ENCODE measurements at regions of chr11 and their contacts with region 1.

Region 1: GRCh38 chr11:59680287-59681154 is 11.7 kb upstream of the PATL1 start:
- DNase-seq: peak; percentile 64
- H3K4me3 ChIP-seq: no peak overlapping the region
- H3K27ac ChIP-seq: no peak overlapping the region
- H3K4me1 ChIP-seq: peaks cover 7% of the 10 kb centered on the region
- H3K27me3 ChIP-seq: no peaks in the 10 kb centered on the region
- CTCF ChIP-seq: peak; percentile 82 to 85

Region 2: GRCh38 chr11:58923300-58923788 is 757.2 kb before region 1 on chr11:
- CTCF ChIA-PET with region 1: no interaction called
- dilution Hi-C with region 1: no loop called
- in situ Hi-C with region 1: no loop called
- intact Hi-C with region 1: no loop called
- DNase-seq: peak; percentile 86
- H3K4me3 ChIP-seq: peak overlapping the region; percentile 7 to 44 (median 13)
- H3K27ac ChIP-seq: no peak overlapping the region
- H3K4me1 ChIP-seq: peaks cover 10% of the 10 kb centered on the region
- H3K27me3 ChIP-seq: no peaks in the 10 kb centered on the region
- CTCF ChIP-seq: peak; percentile 21 to 35

Region 3: DNA sequence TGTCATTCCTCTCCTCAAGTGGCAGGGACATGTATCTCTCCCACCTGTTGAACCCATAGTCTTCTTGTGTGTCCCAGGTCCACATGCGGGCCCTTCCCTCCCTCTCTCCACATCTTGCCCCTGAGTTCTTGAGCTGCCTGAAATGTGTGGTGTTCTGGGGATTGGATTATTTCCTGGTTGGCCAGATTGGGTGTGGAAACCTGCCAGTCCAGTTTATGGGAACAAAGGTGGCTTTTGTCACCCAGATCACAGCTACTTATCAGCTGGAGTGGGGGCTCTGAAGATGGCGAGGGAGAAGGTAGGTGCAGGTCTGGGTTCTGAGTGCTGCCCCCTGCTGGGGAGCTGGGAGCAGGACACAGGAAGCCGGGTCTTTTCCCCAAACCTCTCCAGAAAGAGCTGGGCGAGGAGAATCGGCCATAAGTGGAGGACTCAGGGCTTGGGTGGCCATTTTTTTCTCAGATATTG is 494.4 kb before region 1 on chr11:
- CTCF ChIA-PET with region 1: no interaction called
- dilution Hi-C with region 1: no loop called
- in situ Hi-C with region 1: no loop called
- intact Hi-C with region 1: loop called (anchors 5 kb)
- DNase-seq: peak; percentile 11
- H3K4me3 ChIP-seq: no peak overlapping the region
- H3K27ac ChIP-seq: no peak overlapping the region
- H3K4me1 ChIP-seq: no peaks in the 10 kb centered on the region
- H3K27me3 ChIP-seq: no peaks in the 10 kb centered on the region
- CTCF ChIP-seq: peak; percentile 62 to 88

Region 4: DNA sequence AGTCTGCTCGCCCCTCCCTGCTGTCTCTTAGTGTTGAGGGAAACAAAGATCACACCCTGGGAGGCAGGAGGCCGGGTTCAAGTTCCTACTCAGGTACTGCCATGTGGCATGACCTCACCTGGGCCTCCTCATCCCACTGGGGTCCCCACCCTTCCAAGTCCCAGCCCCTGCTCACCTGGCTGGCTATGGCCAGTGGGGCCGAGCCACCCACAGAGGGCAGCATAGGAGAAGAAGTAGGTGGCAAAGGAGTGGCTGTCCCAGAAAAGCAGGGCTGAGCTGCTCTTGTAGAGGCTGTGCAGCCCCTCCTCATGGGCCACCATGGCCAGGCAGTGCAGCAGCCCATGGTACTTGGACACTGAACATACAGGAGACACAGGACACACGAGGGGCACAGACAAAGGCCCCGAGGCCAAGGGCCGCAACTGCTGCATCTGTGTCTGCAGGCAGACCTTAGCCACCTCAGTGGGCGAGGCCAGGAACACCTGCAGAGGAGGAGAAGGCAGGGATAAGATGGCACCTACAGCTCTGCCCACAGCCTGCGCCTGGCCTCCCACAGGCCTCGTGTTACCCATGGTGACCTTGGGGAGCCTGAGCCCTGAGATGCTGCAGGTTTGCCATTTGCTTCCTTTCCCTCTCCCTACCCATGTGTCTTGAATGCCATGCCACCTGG is 417.2 kb before region 1 on chr11:
- CTCF ChIA-PET with region 1: no interaction called
- dilution Hi-C with region 1: no loop called
- in situ Hi-C with region 1: no loop called
- intact Hi-C with region 1: loop called (anchors 5 kb)
- DNase-seq: peak; percentile 16
- H3K4me3 ChIP-seq: no peak overlapping the region
- H3K27ac ChIP-seq: no peak overlapping the region
- H3K4me1 ChIP-seq: peaks cover 35% of the 10 kb centered on the region
- H3K27me3 ChIP-seq: no peaks in the 10 kb centered on the region
- CTCF ChIP-seq: peak; percentile 46 to 75

Region 5: GRCh38 chr11:59429924-59430516 is 250.5 kb before region 1 on chr11:
- CTCF ChIA-PET with region 1: no interaction called
- dilution Hi-C with region 1: no loop called
- in situ Hi-C with region 1: no loop called
- intact Hi-C with region 1: loop called (anchors 2 kb)
- DNase-seq: peak; percentile 48
- H3K4me3 ChIP-seq: no peak overlapping the region
- H3K27ac ChIP-seq: no peak overlapping the region
- H3K4me1 ChIP-seq: no peaks in the 10 kb centered on the region
- H3K27me3 ChIP-seq: peaks cover 4% of the 10 kb centered on the region
- CTCF ChIP-seq: peak; percentile 81 to 87

Region 6: DNA sequence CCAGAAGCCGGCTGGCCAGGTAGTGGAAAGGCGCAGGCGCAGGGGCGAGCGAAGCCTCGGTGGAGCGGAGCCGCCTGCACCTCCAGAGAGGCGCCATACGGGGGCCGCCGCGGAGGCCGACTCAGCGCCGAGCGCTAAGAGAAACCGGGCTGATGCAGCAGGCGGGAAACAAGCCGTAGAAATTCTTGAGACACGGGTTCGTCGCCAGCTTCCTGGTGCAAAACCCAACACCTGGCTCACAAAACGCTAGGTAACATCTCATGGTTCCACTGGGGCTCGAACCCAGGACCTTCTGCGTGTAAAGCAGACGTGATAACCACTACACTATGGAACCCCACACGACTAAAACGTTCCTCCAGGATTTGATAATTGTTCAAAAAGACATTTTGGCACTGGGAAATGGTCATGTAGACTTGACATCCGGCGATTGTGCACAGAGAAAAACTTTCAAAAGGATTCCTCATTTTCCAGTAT is 130.1 kb before region 1 on chr11:
- CTCF ChIA-PET with region 1: no interaction called
- dilution Hi-C with region 1: no loop called
- in situ Hi-C with region 1: no loop called
- intact Hi-C with region 1: loop called (anchors 5 kb)
- DNase-seq: peak; percentile 97
- H3K4me3 ChIP-seq: peak overlapping the region; percentile 51 to 69 (median 62)
- H3K27ac ChIP-seq: peak overlapping the region; percentile 52
- H3K4me1 ChIP-seq: peaks cover 9% of the 10 kb centered on the region
- H3K27me3 ChIP-seq: no peaks in the 10 kb centered on the region
- CTCF ChIP-seq: peak; percentile 28 to 62

Region 7: DNA sequence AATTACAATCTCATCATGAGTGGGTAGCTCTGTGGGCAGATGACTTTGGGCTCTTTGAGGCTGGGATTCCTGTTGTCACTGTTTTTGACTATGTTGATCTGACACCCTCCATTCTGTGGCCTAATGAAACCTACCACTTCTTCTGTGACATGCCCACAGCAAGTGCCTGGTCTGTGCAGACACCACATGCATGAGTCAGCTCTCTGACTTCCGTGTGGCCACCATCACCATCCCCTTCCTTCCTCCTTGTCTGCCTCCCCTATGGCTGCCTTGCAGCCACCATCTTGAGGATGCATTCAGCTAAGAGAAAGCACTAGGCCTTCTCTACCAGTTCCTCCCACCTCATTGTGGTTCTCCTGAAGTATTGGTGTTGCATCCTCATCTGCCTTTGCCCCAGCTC is 48.4 kb after region 1 on chr11:
- CTCF ChIA-PET with region 1: no interaction called
- dilution Hi-C with region 1: no loop called
- in situ Hi-C with region 1: no loop called
- intact Hi-C with region 1: no loop called
- DNase-seq: no peak
- H3K4me3 ChIP-seq: no peak overlapping the region
- H3K27ac ChIP-seq: no peak overlapping the region
- H3K4me1 ChIP-seq: no peaks in the 10 kb centered on the region
- H3K27me3 ChIP-seq: no peaks in the 10 kb centered on the region
- CTCF ChIP-seq: no peak

Region 8: GRCh38 chr11:59761993-59762392 is 81.5 kb after region 1 on chr11:
- CTCF ChIA-PET with region 1: no interaction called
- dilution Hi-C with region 1: loop called (anchors 5 kb)
- in situ Hi-C with region 1: no loop called
- intact Hi-C with region 1: no loop called
- DNase-seq: no peak
- H3K4me3 ChIP-seq: no peak overlapping the region
- H3K27ac ChIP-seq: no peak overlapping the region
- H3K4me1 ChIP-seq: peaks cover 8% of the 10 kb centered on the region
- H3K27me3 ChIP-seq: no peaks in the 10 kb centered on the region
- CTCF ChIP-seq: no peak